Activated T-helper 1 cell treated with anti-CD3 and anti-CD28 coated beads, Interleukin-12 subunit alpha, Interleukin-12 subunit beta, Interleukin-2, Interleukin-4 antibody, amounts not matched to agents 30 ng/mL and 10 ng/mL and 1 ng/mL, durations not matched to agents 14 hours and 24 hours and 36 hours (primary cell): ENCODE measurements at regions of chr4 and their contacts with region 1.

Region 1: DNA sequence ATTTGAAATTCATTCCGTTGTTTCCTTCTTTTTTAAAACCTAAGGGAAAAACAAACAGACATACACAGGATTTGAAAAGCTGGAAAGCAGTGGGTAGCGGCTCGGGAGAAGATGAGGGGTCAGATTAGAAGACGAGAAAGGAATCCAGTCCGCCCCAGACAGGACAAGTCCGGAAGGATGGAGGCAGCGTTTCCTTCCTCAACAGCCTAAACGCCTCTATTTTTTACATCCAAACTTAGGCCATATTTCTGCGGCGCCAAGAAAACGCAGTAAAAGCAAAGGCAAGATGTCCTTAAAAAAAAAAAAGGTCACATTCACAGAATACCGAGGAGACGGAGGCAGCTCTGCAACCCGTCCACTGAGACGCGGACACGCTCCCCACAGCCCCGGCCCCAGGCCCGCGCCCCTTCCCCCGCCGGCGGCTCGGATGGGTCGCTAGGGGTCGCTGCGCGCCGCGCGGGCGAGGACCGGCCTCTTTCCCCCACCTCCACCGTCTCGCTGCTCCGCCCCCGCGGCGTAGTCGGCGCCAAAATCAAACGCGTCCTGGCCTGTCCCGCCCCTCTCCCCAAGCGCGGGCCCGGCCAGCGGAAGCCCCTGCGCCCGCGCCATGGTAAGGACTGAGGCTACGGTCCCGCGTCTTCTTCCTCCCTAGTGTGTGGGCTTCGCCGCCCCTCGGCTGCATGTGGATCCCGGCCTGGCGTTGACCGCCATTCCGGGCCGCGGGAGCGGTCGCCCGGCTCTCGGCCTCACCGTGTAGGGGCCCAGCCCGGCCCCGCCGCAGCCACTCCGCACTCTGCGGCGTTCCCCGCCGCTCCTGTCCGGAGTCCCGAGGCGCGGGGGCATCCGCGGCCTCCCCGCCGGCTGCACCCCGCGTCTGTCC is at the start of gene MND1:
- DNase-seq: peak; percentile 90
- H3K4me3 Mint-ChIP-seq: peak within 1 kb of the TSS; percentile 91
- H3K27ac Mint-ChIP-seq: peak within 1 kb of the TSS; percentile 85
- H3K4me1 Mint-ChIP-seq: peaks cover 32% of the 10 kb centered on the region
- H3K27me3 Mint-ChIP-seq: peaks cover 13% of the 10 kb centered on the region
- total RNA-seq, gene MND1: 12.5 and 13.5 TPM in 2 replicates

Region 2: DNA sequence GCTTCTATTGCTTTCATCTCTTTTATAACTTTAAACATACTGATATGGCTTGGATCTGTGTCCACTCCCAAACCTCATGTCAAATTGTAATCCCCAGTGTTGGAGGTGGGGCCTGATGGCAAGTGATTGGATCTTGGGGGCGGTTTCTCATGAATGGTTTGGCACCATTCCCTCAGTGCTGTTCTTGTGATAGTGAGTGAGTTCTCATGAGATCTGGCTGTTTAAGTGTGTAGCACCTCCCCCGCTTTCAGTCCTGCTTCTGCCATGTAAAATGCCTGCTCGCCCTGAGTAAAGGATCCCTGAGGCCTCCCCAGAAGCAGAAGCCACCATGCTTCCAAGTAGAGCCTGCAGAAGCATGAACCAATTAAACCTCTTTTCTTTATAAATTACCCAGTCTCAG is 17.8 kb after region 1 on chr4:
- intact Hi-C with region 1: loop called (anchors 1 kb)
- DNase-seq: no peak
- H3K4me3 Mint-ChIP-seq: no peak overlapping the region
- H3K27ac Mint-ChIP-seq: no peak overlapping the region
- H3K4me1 Mint-ChIP-seq: peaks cover 10% of the 10 kb centered on the region
- H3K27me3 Mint-ChIP-seq: no peaks in the 10 kb centered on the region

Region 3: GRCh38 chr4:153432968-153433753 is 88.8 kb after region 1 on chr4:
- intact Hi-C with region 1: loop called (anchors 1 kb)
- DNase-seq: peak; percentile 68
- H3K4me3 Mint-ChIP-seq: peak overlapping the region; percentile 76
- H3K27ac Mint-ChIP-seq: peak overlapping the region; percentile 87
- H3K4me1 Mint-ChIP-seq: peaks cover 46% of the 10 kb centered on the region
- H3K27me3 Mint-ChIP-seq: peaks cover 4% of the 10 kb centered on the region

Region 4: GRCh38 chr4:153528705-153529485 is 184.5 kb after region 1 on chr4:
- intact Hi-C with region 1: loop called (anchors 2 kb)
- DNase-seq: no peak
- H3K4me3 Mint-ChIP-seq: peak overlapping the region; percentile 71
- H3K27ac Mint-ChIP-seq: peak overlapping the region; percentile 93
- H3K4me1 Mint-ChIP-seq: peaks cover 66% of the 10 kb centered on the region
- H3K27me3 Mint-ChIP-seq: no peaks in the 10 kb centered on the region

Region 5: DNA sequence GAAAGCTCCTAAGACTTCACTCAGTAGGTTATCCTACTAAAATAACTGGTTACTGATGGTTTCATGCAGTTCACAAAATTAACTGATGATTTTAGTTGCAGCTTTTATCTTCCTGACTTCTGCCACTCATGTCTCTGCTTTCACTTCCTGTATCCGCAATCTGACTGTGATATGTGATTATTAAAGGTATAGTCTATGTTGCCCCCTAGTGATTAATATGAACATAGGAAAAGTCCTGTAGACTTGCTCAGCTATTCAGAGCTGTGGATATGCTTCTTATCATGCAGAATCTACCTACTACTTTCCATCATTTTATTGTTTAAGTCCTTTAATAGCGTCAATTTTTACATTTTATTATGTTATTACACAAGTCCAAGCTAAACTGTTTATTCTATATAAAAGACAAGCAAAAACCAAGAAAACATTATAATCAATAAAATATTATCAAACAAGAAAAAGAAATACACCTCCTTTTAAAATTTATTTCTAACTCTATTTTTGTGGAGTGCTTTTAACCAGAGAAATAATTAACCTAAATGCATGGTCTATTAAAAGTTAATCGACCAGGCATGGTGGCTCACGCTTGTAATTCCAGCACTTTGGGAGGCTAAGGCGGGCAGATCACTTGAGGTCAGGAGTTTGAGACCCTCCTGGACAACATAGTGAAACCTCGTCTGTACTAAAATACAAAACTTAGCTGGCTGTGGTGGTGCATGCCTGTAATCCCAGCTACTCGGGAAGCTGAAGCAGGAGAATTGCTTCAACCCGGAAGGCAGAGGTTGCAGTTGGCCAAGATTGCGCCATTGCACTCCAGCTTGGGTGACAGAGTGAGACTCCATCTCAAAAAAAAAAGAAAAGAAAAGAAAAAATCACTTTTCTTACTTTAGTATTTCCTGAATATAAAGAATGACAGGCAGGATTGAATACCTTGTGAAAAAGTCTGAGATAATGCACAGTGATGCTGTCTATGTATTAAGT is 299.3 kb after region 1 on chr4:
- intact Hi-C with region 1: loop called (anchors 1 kb)
- DNase-seq: no peak
- H3K4me3 Mint-ChIP-seq: no peak overlapping the region
- H3K27ac Mint-ChIP-seq: no peak overlapping the region
- H3K4me1 Mint-ChIP-seq: peaks cover 22% of the 10 kb centered on the region
- H3K27me3 Mint-ChIP-seq: no peaks in the 10 kb centered on the region

Region 6: DNA sequence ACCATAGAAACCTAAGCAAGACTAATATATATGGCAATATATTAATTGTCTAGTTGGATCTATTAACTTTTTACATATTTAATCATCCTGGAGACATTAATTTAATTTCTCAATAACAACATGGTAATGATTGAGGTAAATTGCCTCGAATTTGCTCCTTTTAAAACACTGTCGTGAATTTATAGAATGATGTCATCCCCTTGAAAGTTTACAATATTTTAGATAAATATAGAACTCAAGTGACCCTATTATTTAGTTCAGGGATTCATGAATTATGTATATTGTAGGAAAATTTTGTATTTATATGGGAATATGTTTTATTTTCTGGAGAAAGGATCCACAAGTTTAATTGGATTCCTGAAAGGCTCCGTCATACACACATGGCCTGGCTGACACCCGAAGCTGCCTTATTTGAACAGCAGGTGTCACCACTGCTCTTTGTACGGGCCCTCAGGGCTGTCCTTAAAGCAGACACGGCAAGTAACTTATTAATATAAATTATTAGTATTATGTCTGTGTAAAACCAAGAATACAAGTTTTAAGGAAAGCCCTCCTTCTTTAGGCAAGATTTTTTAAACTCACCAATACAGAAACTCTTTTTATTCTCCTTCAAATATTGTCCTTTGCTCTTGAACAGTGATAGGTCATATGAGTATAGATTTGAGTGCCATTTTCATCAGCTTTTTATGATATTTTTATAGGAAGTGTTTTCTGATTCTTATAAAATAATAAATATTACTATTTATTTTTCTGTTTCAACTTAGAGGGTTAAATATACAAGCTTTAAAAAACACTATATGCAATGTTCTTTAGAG is 1207.7 kb after region 1 on chr4:
- intact Hi-C with region 1: loop called (anchors 10 kb)
- DNase-seq: peak; percentile 46
- H3K4me3 Mint-ChIP-seq: no peak overlapping the region
- H3K27ac Mint-ChIP-seq: no peak overlapping the region
- H3K4me1 Mint-ChIP-seq: peaks cover 28% of the 10 kb centered on the region
- H3K27me3 Mint-ChIP-seq: peaks cover 4% of the 10 kb centered on the region